ENCODE measurements at regions of chr12 and their contacts with region 1.

Region 1: GRCh38 chr12:22474970-22475720 is 69.2 kb downstream of the C2CD5 start:
- DNase-seq: no peak
- ATAC-seq: no peak
- H3K4me3 Mint-ChIP-seq: no peak overlapping the region
- H3K27ac Mint-ChIP-seq: no peak overlapping the region
- H3K4me1 Mint-ChIP-seq: peaks cover 30% of the 10 kb centered on the region
- H3K27me3 Mint-ChIP-seq: no peaks in the 10 kb centered on the region

Region 2: GRCh38 chr12:22459838-22460490 is 15.2 kb before region 1 on chr12:
- CTCF ChIA-PET with region 1: interaction called, 11 read pairs
- DNase-seq: no peak
- ATAC-seq: peak; percentile 57
- H3K4me3 Mint-ChIP-seq: no peak overlapping the region
- H3K27ac Mint-ChIP-seq: no peak overlapping the region
- H3K4me1 Mint-ChIP-seq: peaks cover 4% of the 10 kb centered on the region
- H3K27me3 Mint-ChIP-seq: no peaks in the 10 kb centered on the region

Measured in activated CD8-positive, alpha-beta memory T cell treated with anti-CD3 and anti-CD28 coated beads, Interleukin-2, amount 10 ng/mL, durations not matched to agents 7 days and 5 days (primary cell).